A673 (cell line): ENCODE measurements at regions of chr5 and their contacts with region 1.

Region 1: GRCh38 chr5:92560698-92561361 is 1020.2 kb downstream of the NR2F1-AS1 start:
- DNase-seq: peak; percentile 41
- H3K4me3 ChIP-seq: no peak overlapping the region
- H3K27ac ChIP-seq: no peak overlapping the region
- H3K4me1 ChIP-seq: peaks cover 10% of the 10 kb centered on the region
- H3K27me3 ChIP-seq: no peaks in the 10 kb centered on the region
- CTCF ChIP-seq: no peak

Region 2: DNA sequence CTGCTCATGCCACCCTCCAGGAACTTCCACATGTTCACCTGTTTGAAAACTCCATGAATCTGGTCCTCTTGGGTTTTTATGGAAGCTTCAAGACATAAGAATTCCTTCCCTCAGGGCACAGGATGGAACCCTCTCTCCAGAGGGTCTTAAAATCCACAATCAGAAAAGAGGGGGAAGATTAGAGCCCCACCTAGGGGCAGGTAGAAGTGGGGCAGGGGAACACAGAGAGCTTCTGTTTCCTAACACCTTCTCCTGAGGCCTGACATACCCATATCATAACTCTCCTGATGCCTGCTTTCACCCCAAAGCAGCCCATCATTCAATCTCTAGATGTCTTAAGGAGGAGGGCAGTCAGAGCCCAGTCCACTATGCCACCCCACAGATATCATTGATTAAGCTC is 90.1 kb before region 1 on chr5:
- CTCF ChIA-PET with region 1: no interaction called
- POLR2A ChIA-PET with region 1: interaction called, 11 read pairs
- intact Hi-C with region 1: no loop called
- DNase-seq: peak; percentile 3
- H3K4me3 ChIP-seq: no peak overlapping the region
- H3K27ac ChIP-seq: no peak overlapping the region
- H3K4me1 ChIP-seq: no peaks in the 10 kb centered on the region
- H3K27me3 ChIP-seq: no peaks in the 10 kb centered on the region
- CTCF ChIP-seq: peak; percentile 26; the same call in 1 of the 2 replicates

Region 3: DNA sequence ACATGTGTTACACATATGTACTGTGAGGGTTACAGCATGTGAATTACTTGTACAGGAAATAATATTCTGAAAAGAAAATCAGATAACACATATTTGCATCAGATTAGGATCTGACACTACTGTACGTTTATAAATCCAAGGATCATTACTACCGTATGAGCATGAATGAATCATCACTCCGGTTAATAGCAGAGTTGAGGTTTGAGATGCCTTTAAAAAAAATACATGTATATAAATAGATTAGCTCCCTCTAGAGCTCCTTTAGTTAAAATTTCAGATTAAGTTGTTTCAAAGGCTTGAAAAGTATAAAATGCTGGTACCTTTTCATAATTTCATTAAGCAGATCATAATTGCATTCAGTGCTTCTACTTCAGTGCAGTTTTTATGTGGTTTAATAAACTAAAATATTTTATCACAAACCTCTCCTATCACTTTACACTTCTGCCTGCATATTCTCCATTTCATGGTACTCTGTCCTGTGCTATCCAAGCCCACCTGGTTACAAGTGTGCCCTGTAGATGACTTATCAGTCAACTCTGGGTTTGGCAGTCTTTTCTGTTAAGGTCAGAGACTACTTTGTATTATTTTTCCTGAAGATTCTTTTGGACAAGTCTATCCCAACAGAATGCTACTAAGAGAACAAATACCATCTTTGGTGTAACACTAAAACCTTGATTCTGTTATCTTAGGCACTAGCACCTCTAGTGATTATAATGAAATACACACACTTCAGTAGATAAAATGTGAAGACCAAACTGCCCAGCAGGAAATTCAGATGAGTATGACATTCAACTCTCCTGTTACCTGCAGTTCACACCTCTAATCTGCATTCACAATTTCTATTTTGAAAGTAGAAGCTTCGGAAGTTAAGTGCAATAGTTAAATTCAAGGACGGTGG is 1228.6 kb after region 1 on chr5:
- CTCF ChIA-PET with region 1: no interaction called
- POLR2A ChIA-PET with region 1: no interaction called
- intact Hi-C with region 1: loop called (anchors 5 kb)
- DNase-seq: peak; percentile 9
- H3K4me3 ChIP-seq: no peak overlapping the region
- H3K27ac ChIP-seq: no peak overlapping the region
- H3K4me1 ChIP-seq: no peaks in the 10 kb centered on the region
- H3K27me3 ChIP-seq: no peaks in the 10 kb centered on the region
- CTCF ChIP-seq: 0 out of 2 replicates have a peak, but pooled peaks have one; percentile 8